ENCODE measurements at regions of chr11 and their contacts with region 1.

Region 1: DNA sequence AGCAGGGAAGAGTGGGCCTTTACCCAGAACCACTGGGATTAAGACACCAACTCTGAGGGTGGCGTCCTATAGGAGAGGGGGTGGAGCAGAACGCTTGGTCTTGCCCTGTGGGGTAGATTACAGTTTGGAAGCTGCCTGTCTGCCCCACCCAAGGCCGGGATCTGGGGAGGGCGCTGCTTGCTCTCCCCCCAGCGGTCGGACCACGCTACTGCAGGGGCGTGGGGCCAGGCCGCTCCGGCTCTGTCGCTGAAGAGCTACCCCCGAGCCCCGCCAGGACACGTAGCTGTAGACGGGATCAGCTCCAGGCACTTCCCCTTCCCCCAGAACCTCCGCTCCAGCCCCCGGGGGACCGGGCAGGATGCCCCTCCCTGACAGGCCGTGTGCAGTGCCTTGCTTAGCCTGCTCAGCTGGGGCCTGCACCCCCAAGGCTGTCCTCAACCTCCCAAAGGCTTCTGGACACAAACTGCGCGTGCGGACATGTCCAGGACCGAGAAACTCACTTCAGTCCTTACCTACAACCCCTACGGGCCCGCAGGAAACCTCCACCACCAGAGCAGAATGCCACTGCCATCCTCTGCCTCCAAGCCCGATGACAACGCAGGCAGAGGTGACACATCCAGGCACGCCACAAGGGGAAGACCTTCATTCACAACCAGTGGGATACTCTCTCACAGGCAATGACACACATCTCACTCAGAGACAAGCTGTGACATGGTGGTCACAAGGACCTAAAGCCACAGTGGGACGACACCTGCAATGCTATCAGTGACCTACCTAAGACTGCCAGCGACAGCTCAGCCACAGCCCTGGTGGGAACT is 3.6 kb downstream of the AHNAK start:
- DNase-seq: peak; percentile 88 to 97 (median 88)
- H3K4me3 ChIP-seq: peak overlapping the region; percentile 83 to 96 (median 87)
- H3K4me3 Mint-ChIP-seq: peak overlapping the region; percentile 96 to 98
- H3K27ac ChIP-seq: peak overlapping the region; percentile 82 to 99
- H3K27ac Mint-ChIP-seq: peak overlapping the region; percentile 93 to 100 (median 96)
- H3K4me1 ChIP-seq: peaks cover 79 to 80% of the 10 kb centered on the region in 2 donors
- H3K4me1 Mint-ChIP-seq: peaks cover 74% of the 10 kb centered on the region
- H3K27me3 ChIP-seq: no peaks in the 10 kb centered on the region
- H3K27me3 Mint-ChIP-seq: peaks cover 0 to 13% (median 4%) of the 10 kb centered on the region in 3 donors
- CTCF ChIP-seq: peak; percentile 100

Region 2: GRCh38 chr11:62427630-62428233 is 115.2 kb before region 1 on chr11:
- intact Hi-C with region 1: loop called (anchors 5 to 10 kb)
- DNase-seq: peak; percentile 77 to 90 (median 89)
- H3K4me3 ChIP-seq: peak overlapping the region in 1 of 3 experiments; percentile 18
- H3K4me3 Mint-ChIP-seq: peak overlapping the region in 1 of 2 donors; percentile 54
- H3K27ac ChIP-seq: peak overlapping the region; percentile 90 to 96
- H3K27ac Mint-ChIP-seq: peak overlapping the region; percentile 91 to 98 (median 96)
- H3K4me1 ChIP-seq: peaks cover 82 to 86% of the 10 kb centered on the region in 2 donors
- H3K4me1 Mint-ChIP-seq: peaks cover 85% of the 10 kb centered on the region
- H3K27me3 ChIP-seq: no peaks in the 10 kb centered on the region
- H3K27me3 Mint-ChIP-seq: peaks cover 0 to 2% (median 0%) of the 10 kb centered on the region in 3 donors
- CTCF ChIP-seq: no peak

Region 3: GRCh38 chr11:62472012-62472884 is 70.7 kb before region 1 on chr11:
- intact Hi-C with region 1: no loop called
- DNase-seq: peak in 1 of 3 donors; percentile 24
- H3K4me3 ChIP-seq: no peak overlapping the region
- H3K4me3 Mint-ChIP-seq: no peak overlapping the region
- H3K27ac ChIP-seq: no peak overlapping the region
- H3K27ac Mint-ChIP-seq: peak overlapping the region in 1 of 7 donors; percentile 70
- H3K4me1 ChIP-seq: peaks cover 5 to 7% of the 10 kb centered on the region in 2 donors
- H3K4me1 Mint-ChIP-seq: peaks cover 9% of the 10 kb centered on the region
- H3K27me3 ChIP-seq: no peaks in the 10 kb centered on the region
- H3K27me3 Mint-ChIP-seq: no peaks in the 10 kb centered on the region
- CTCF ChIP-seq: no peak

Region 4: DNA sequence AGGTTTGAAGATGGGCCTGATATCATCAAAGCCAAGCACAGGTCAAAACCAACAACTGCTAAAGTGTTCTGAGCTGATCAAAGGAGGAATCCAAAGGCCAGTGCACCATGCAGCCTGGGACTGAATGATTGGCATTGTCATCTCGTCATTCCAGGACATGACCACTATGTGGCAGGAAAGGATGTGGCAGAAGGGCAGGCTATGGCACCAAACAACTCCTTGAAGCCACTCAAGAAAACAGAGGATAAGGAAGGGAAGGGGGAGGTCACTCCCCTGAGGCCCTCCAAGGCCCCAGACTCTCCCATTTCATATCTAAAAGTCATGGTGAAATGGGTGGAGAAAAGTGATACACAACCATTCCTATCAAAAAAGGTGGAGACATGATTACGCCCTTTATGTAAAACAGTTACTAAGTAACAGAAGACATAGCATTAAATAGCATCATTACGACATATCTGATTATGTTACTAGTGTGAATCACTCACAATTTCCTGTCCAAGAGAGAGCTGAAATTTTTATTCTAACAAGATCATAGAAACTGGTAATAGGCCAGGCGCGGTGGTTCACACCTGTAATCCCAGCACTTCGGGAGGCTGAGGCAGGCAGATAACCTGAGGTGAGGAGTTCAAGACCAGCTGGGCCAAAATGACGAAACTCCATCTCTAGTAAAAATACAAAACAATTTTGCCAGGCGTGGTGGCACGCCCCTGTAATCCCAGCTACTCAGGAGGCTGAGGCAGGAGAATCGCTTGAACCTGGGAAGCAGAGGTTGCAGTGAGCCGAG is 45.6 kb before region 1 on chr11:
- intact Hi-C with region 1: loop called in 1 of 2 experiments (anchors 5 kb)
- DNase-seq: peak; percentile 63 to 93 (median 79)
- H3K4me3 ChIP-seq: peak overlapping the region in 1 of 3 experiments; percentile 29
- H3K4me3 Mint-ChIP-seq: peak overlapping the region; percentile 29 to 43
- H3K27ac ChIP-seq: peak overlapping the region; percentile 80 to 87
- H3K27ac Mint-ChIP-seq: peak overlapping the region; percentile 93 to 98 (median 98)
- H3K4me1 ChIP-seq: peaks cover 66 to 68% of the 10 kb centered on the region in 2 donors
- H3K4me1 Mint-ChIP-seq: peaks cover 61% of the 10 kb centered on the region
- H3K27me3 ChIP-seq: no peaks in the 10 kb centered on the region
- H3K27me3 Mint-ChIP-seq: peaks cover 0 to 3% (median 0%) of the 10 kb centered on the region in 3 donors
- CTCF ChIP-seq: peak; percentile 70

Region 5: GRCh38 chr11:62560566-62561103 is 17.7 kb after region 1 on chr11:
- intact Hi-C with region 1: loop called in 1 of 2 experiments (anchors 2 kb)
- DNase-seq: peak; percentile 88 to 94 (median 90)
- H3K4me3 ChIP-seq: no peak overlapping the region
- H3K4me3 Mint-ChIP-seq: no peak overlapping the region
- H3K27ac ChIP-seq: peak overlapping the region; percentile 10 to 56
- H3K27ac Mint-ChIP-seq: peak overlapping the region; percentile 70 to 87 (median 81)
- H3K4me1 ChIP-seq: peaks cover 36 to 44% of the 10 kb centered on the region in 2 donors
- H3K4me1 Mint-ChIP-seq: peaks cover 37% of the 10 kb centered on the region
- H3K27me3 ChIP-seq: no peaks in the 10 kb centered on the region
- H3K27me3 Mint-ChIP-seq: peaks cover 0 to 2% (median 2%) of the 10 kb centered on the region in 3 donors
- CTCF ChIP-seq: peak; percentile 78